MCF 10A (cell line): ENCODE measurements at regions of chr15 and their contacts with region 1.

Region 1: GRCh38 chr15:44738340-44738984 is 2.1 kb downstream of the TRIM69 start:
- DNase-seq: peak; percentile 69
- H3K4me3 Mint-ChIP-seq: no peak overlapping the region
- H3K27ac Mint-ChIP-seq: no peak overlapping the region
- H3K4me1 Mint-ChIP-seq: peaks cover 7% of the 10 kb centered on the region
- H3K27me3 Mint-ChIP-seq: no peaks in the 10 kb centered on the region
- CTCF ChIP-seq: peak; percentile 73

Region 2: DNA sequence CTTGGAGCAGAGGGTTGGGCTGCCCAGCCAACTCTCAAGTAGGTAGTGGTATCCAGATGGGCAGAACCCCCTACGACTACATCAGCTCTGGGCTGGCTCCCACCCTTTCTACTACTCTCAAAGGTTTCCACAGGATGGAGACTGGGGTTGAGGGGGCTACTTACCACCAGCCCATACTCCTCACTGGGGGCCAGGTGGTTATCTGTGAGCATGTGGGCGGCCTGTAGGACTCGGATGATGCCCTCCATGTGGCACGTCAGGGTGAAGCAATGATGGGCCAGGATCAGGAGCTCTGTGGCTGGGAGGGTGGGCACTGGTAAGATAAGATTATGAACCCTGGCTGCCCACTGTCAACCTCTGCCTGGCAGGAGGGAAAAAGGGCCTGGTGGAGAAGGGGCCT is 168.1 kb before region 1 on chr15:
- CTCF ChIA-PET with region 1: interaction called, 62 read pairs
- POLR2A ChIA-PET with region 1: no interaction called
- intact Hi-C with region 1: no loop called
- DNase-seq: no peak
- H3K4me3 Mint-ChIP-seq: no peak overlapping the region
- H3K27ac Mint-ChIP-seq: no peak overlapping the region
- H3K4me1 Mint-ChIP-seq: no peaks in the 10 kb centered on the region
- H3K27me3 Mint-ChIP-seq: no peaks in the 10 kb centered on the region
- CTCF ChIP-seq: no peak

Region 3: DNA sequence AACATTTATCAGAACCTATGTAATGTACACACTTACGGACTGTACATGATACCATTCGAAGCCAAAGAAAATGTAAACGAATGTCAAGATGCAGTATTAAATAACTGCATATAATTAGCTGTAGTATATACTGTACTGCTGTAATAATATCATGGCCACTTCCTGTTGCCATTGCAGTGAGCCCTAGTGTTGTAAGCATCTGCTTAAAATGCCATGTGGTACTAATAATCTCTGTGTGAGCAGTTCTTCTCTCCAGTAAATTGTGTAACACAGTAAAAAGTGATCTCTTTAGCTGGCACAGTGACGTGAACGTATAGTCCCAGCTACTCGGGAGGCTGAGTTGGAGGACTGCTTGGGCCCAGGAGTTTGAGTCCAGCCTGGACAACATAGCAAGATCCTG is 83.6 kb before region 1 on chr15:
- CTCF ChIA-PET with region 1: interaction called, 11 read pairs
- POLR2A ChIA-PET with region 1: interaction called, 4 read pairs
- intact Hi-C with region 1: no loop called
- DNase-seq: no peak
- H3K4me3 Mint-ChIP-seq: no peak overlapping the region
- H3K27ac Mint-ChIP-seq: no peak overlapping the region
- H3K4me1 Mint-ChIP-seq: peaks cover 7% of the 10 kb centered on the region
- H3K27me3 Mint-ChIP-seq: no peaks in the 10 kb centered on the region
- CTCF ChIP-seq: no peak

Region 4: GRCh38 chr15:44682211-44682610 is 56.3 kb before region 1 on chr15:
- CTCF ChIA-PET with region 1: interaction called, 10 read pairs
- POLR2A ChIA-PET with region 1: no interaction called
- intact Hi-C with region 1: no loop called
- DNase-seq: no peak
- H3K4me3 Mint-ChIP-seq: no peak overlapping the region
- H3K27ac Mint-ChIP-seq: no peak overlapping the region
- H3K4me1 Mint-ChIP-seq: no peaks in the 10 kb centered on the region
- H3K27me3 Mint-ChIP-seq: peaks cover 26% of the 10 kb centered on the region
- CTCF ChIP-seq: no peak

Region 5: GRCh38 chr15:44753345-44753744 is 14.9 kb after region 1 on chr15:
- CTCF ChIA-PET with region 1: interaction called, 13 read pairs
- POLR2A ChIA-PET with region 1: interaction called, 4 read pairs
- intact Hi-C with region 1: no loop called
- DNase-seq: no peak
- H3K4me3 Mint-ChIP-seq: no peak overlapping the region
- H3K27ac Mint-ChIP-seq: no peak overlapping the region
- H3K4me1 Mint-ChIP-seq: no peaks in the 10 kb centered on the region
- H3K27me3 Mint-ChIP-seq: peaks cover 20% of the 10 kb centered on the region
- CTCF ChIP-seq: no peak

Region 6: DNA sequence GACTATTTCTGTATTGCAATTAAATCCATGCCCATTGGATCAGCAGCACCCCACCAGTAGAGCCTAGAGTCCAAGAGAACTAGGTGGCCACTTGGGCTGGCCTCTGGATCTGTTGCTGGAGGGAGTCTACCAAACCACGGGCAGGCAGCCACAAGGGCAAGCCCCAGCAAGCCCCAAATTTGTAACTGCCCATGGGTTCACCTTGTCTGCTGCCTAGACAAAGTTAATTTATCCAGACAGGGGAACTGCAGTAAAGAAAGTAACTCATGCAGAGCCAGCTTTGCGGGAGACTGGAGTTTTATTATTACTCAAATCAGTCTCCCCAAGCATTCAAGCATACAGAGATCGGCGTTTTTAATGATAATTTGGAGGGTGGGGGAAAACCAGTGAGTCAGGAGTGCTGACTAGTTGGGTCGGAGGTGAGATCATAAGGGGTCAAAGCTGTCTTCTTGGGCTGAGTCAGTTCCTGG is 144.1 kb after region 1 on chr15:
- CTCF ChIA-PET with region 1: no interaction called
- POLR2A ChIA-PET with region 1: no interaction called
- intact Hi-C with region 1: no loop called
- DNase-seq: peak; percentile 64
- H3K4me3 Mint-ChIP-seq: no peak overlapping the region
- H3K27ac Mint-ChIP-seq: peak overlapping the region; percentile 20
- H3K4me1 Mint-ChIP-seq: peaks cover 6% of the 10 kb centered on the region
- H3K27me3 Mint-ChIP-seq: no peaks in the 10 kb centered on the region
- CTCF ChIP-seq: no peak